ENCODE measurements at regions of chr5 and their contacts with region 1.

Region 1: GRCh38 chr5:142215915-142216681 is 107.5 kb downstream of the NDFIP1 start:
- DNase-seq: peak; percentile 88 to 89
- ATAC-seq: peak; percentile 91
- H3K4me3 ChIP-seq: no peak overlapping the region
- H3K27ac ChIP-seq: peak overlapping the region; percentile 50 to 87
- H3K4me1 ChIP-seq: peaks cover 4 to 8% of the 10 kb centered on the region in 2 donors
- H3K27me3 ChIP-seq: no peaks in the 10 kb centered on the region

Region 2: GRCh38 chr5:142542906-142543305 is 326.8 kb after region 1 on chr5:
- intact Hi-C with region 1: loop called in 1 of 2 experiments (anchors 1 kb)
- DNase-seq: no peak
- ATAC-seq: peak; percentile 29
- H3K4me3 ChIP-seq: no peak overlapping the region
- H3K27ac ChIP-seq: peak overlapping the region; percentile 53 to 59
- H3K4me1 ChIP-seq: peaks cover 2 to 6% of the 10 kb centered on the region in 2 donors
- H3K27me3 ChIP-seq: no peaks in the 10 kb centered on the region